GM10248 (cell line): ENCODE measurements at regions of chr10 and their contacts with region 1.

Region 1: DNA sequence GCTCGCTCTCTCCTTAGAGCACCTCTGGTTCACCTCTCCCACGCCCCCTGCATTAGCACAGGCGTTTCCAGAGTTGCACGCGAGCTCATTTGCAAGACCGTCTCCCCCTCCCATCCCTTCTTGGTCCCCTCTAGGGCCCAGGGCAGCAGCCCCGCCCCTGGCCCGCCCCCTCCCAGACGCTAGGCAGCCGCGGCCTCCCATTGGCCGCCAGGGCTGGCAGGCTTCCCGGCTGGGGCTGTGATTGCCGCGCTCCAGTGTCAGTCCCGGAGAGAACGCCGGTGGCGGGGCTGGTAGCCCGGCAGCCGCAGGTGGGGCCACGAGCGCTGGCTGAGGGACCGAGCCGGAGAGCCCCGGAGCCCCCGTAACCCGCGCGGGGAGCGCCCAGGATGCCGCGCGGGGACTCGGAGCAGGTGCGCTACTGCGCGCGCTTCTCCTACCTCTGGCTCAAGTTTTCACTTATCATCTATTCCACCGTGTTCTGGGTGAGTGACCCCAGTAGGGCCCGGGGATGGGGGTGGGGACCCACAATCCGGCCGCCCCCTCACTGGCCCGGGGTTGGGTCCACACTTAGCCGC is at the start of gene TSPAN15:
- DNase-seq: peak; percentile 89
- CTCF ChIP-seq: no peak

Region 2: DNA sequence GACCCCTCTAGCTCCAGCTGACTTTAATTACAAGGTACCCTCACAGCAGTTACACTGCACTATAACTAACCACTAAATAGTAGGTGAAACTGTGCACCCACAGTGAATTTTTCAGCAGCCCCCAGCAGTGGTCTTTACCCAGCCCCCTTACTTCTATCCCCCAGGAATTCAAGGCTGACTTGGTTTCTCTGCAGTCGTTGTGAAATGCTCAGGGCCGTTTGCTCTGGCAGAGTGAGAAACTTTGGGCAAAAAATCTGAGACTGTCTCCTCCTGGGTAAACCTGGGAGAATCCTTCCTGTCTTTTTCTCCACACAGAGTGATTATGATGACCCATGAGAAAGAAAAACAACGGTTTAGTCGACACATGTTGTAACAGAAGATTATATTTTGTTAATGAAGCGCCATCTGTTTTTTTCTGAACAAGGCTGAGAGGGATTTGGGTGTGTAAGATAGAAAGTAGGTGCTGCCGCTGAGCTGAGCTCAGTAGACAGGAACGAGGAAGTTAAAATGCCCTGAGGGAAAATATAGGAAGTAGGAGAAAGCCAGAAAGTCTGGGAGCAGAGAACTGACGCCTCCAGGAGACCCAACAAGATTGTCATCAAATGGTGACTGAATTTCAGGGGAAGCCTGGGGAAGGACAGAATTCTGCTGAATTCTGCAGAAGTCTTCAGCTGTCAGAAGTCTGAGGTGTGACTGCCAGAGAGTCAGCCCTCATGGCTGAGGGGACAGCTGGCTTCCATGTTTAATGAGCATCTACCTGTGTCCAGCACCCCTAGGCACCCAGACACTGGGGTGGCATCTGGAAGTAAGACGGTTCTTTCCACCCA is 12.8 kb before region 1 on chr10:
- CTCF ChIA-PET with region 1: interaction called, 29 read pairs
- POLR2A ChIA-PET with region 1: no interaction called
- DNase-seq: no peak
- CTCF ChIP-seq: no peak